ENCODE measurements at regions of chr7 and their contacts with region 1.

Region 1: DNA sequence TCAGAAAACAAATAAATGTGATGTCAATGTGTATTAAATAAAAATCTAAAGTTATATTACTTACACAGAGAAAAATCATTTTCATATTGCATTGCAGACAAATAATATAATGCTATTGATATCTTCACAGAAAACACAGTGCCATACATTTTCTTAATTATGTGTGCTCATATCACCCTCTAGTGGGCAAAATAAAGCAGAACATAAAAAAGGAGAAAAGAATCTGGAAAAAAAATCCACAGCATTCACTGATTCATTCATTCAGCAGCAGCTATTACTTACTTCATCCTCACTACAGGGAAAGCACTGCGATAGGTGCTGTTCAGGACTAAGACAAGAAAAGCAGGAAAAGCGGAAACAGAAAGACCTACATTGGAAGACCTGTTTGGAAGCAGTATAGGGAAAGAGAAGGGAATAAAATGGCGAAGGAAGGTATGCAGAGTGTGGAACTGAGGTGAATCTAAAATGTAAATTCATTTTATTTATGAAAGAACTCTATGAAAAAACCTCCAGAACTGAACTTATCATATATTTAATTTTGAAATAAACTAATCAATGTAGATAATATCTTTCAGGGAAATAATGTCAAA is 73.2 kb downstream of the POT1 start:
- DNase-seq: no peak
- H3K4me3 Mint-ChIP-seq: no peak overlapping the region
- H3K27ac Mint-ChIP-seq: no peak overlapping the region
- H3K4me1 Mint-ChIP-seq: no peaks in the 10 kb centered on the region
- H3K27me3 Mint-ChIP-seq: no peaks in the 10 kb centered on the region

Region 2: DNA sequence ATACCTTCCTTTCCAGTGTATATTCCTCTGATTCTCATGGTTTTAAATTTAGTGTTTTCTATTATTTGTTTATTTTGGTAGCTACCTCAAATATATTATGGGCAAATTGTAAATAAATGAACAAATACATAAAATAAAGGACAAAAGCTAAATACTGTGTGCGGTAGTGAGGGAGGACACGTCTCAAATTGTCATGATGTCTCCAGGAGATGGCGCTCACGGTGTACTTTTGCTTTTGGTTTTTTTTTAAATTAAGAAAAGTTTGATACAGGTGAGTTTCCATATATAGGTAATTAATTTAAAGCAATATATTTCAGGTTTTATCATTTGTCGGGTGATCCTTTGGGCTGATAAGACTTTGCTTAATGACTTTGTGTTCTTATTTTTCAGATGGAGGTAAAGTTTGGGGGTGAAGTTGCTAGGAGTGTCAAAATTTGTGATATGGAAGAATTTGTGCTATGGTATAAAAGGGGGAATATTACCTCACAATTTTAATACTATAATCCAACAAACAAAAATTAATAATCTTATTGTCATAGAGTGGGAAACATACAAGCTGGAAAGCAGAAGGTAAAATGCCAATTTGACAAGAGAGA is 755.1 kb before region 1 on chr7:
- intact Hi-C with region 1: loop called (anchors 2 kb)
- DNase-seq: no peak
- H3K4me3 Mint-ChIP-seq: no peak overlapping the region
- H3K27ac Mint-ChIP-seq: no peak overlapping the region
- H3K4me1 Mint-ChIP-seq: no peaks in the 10 kb centered on the region
- H3K27me3 Mint-ChIP-seq: no peaks in the 10 kb centered on the region